AG04449 (cell line): ENCODE measurements at regions of chr15 and their contacts with region 1.

Region 1: GRCh38 chr15:89760303-89761008 is 9.4 kb upstream of the MESP1 start:
- DNase-seq: no peak
- H3K4me3 ChIP-seq: no peak overlapping the region
- CTCF ChIP-seq: peak; percentile 99

Region 2: GRCh38 chr15:89740137-89740536 is 20.3 kb before region 1 on chr15:
- CTCF ChIA-PET with region 1: interaction called, 24 read pairs
- POLR2A ChIA-PET with region 1: no interaction called
- DNase-seq: no peak
- H3K4me3 ChIP-seq: no peak overlapping the region
- CTCF ChIP-seq: peak; percentile 76

Region 3: GRCh38 chr15:89781891-89782618 is 21.6 kb after region 1 on chr15:
- CTCF ChIA-PET with region 1: interaction called, 176 read pairs
- POLR2A ChIA-PET with region 1: interaction called, 3 read pairs
- DNase-seq: no peak
- H3K4me3 ChIP-seq: no peak overlapping the region
- CTCF ChIP-seq: no peak

Region 4: DNA sequence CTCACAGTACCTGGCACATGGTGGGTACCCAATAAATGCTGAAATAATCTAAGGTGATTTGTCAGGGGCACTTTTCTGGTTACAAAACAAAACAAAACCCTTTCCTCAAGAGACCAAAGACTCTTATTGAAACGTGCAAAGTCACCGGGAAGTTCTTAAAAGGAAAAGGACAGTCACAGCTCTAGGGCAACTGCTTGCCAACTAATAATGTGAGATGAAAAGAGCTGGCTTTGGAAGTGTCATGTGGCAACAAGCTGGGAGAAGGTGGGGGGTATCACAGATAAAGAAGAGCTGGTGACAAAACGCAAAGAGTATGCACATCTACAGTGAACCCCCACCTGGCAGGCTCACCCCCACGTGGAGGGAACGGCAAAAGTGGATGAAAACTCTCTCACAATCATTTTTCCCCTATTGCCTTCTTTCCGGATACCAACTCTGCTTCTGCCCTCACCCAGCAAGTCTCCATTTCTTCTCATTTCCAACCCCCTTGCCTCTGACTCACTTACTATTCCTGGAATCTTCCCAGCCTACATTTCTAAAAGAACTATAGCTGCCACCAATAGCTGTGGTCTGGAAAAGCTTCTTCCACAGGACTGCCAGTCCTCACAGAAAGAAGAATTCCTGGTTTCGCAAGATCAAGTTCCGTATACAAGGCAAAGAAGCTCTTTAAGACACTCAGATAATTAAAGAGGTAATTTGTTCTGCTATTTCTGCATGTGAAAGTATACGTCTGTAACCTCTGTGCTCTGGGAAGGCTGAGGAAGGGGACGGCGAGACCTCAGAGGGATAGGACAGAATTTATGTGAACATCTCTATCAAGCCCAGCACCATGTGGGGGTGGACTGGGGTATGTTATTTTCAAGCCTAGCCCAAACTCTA is 76.0 kb after region 1 on chr15:
- CTCF ChIA-PET with region 1: interaction called, 29 read pairs
- POLR2A ChIA-PET with region 1: interaction called, 3 read pairs
- DNase-seq: peak; percentile 93
- H3K4me3 ChIP-seq: peak overlapping the region; percentile 35
- CTCF ChIP-seq: no peak

Region 5: DNA sequence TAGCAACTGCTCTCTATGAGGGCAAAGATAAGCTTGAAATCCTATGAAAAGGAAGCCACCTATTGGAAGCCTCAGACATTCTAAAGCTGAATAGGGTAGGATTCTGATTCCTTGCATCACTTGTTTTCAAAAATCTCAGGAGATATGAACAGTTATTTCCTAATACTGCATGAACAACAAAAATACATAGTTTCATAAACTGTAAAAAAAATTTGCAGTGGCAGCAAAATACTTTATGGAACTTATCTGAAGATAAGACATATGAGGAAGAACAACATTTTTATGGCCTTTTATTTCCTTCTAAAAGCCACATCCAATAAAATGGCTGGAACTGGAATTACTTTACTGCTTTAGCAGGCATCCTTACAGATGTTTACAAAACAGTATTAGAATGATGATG is 103.5 kb after region 1 on chr15:
- CTCF ChIA-PET with region 1: interaction called, 63 read pairs
- POLR2A ChIA-PET with region 1: no interaction called
- DNase-seq: no peak
- H3K4me3 ChIP-seq: no peak overlapping the region
- CTCF ChIP-seq: no peak

Region 6: DNA sequence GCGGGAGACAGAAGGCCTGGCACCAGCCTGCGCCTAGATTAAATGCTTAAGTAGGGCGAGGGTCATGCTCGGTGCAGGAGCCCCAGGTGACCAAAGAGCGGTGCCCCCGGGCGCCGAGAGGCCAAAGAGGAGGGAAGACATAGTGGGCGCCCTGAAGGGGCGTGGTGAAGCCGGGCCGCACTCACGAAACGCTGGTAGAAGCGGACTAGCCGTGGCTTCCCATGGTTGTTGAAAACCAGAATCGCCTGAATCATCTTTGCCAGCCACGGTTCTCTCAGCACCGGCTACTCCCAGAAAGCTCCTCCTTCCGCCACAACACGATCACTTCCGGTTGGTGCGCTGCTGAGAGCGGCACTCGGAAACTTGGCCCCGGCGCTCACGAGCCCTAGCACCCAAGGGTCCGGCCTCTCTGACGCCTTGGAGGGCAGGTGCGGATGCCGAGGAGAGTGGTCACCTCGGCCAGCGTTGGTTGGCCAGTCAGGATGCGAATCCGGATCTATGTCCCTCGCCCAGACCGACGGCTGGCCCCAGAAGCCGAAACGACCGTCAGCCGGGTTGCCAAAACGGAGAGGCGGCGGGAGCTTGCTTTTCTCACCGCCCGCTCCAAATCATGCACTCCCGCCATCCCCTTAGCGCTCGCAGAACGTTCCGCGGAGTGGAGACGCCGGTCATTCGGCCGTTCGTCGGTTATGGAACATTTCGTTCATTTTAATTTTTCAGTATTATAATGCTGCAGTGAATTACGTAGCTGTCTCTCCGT is 133.4 kb after region 1 on chr15 and contains the start of gene AP3S2:
- CTCF ChIA-PET with region 1: interaction called, 339 read pairs
- POLR2A ChIA-PET with region 1: interaction called, 3 read pairs
- DNase-seq: peak; percentile 62
- H3K4me3 ChIP-seq: peak within 1 kb of the TSS; percentile 91
- CTCF ChIP-seq: no peak